ENCODE measurements at regions of chr10 and their contacts with region 1.

Region 1: DNA sequence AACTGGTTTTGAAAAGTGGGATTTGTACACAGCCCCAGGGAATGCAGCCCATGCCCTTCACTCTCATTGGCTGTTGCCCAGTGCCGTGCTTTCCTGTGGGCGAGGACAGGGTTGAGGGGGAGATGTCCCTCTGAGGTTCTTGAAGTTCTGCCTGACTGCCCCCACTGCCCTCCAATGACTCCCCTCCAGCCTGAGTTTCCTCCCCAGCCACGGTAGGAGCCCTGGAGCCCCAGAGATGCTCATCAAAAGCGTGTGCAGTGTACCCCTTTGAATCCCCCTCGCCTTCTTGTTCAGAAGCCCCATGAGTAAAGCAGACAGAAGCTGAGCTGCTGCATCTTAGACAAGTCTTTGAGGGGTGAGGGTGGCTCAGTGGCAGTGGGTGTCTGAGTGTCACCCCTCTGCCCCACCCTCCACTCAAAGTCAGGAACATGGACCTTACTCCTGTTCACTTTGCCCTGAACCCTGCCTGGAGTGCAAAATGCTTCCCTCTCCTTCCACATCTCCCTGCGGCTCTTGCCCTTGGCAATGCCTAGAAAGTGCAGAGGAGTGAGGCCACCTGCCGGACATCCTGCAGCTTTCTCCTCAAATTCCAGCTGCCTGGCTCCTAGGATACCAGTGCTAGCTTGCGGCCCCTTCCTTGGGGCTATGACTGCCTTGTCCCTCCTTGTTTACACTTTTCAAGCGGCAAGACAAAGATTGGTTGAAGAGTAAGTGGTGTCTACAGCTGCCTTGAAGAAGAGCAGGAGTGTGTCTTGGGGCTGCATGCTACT is 19.9 kb downstream of the FAM241B start:
- DNase-seq: no peak
- H3K4me3 ChIP-seq: no peak overlapping the region
- H3K27ac ChIP-seq: no peak overlapping the region
- H3K4me1 ChIP-seq: no peaks in the 10 kb centered on the region
- H3K27me3 ChIP-seq: peaks cover 4% of the 10 kb centered on the region
- CTCF ChIP-seq: no peak
- EP300 ChIP-seq: no peak
- POLR2A ChIP-seq: no peak

Region 2: GRCh38 chr10:69716711-69717560 is 67.0 kb after region 1 on chr10:
- in situ Hi-C with region 1: loop called in 1 of 4 experiments (anchors 10 kb)
- intact Hi-C with region 1: no loop called
- DNase-seq: peak; percentile 66
- H3K4me3 ChIP-seq: no peak overlapping the region
- H3K27ac ChIP-seq: no peak overlapping the region
- H3K4me1 ChIP-seq: no peaks in the 10 kb centered on the region
- H3K27me3 ChIP-seq: no peaks in the 10 kb centered on the region
- CTCF ChIP-seq: peak; percentile 54 to 82 (median 74)
- EP300 ChIP-seq: no peak
- POLR2A ChIP-seq: no peak

Region 3: DNA sequence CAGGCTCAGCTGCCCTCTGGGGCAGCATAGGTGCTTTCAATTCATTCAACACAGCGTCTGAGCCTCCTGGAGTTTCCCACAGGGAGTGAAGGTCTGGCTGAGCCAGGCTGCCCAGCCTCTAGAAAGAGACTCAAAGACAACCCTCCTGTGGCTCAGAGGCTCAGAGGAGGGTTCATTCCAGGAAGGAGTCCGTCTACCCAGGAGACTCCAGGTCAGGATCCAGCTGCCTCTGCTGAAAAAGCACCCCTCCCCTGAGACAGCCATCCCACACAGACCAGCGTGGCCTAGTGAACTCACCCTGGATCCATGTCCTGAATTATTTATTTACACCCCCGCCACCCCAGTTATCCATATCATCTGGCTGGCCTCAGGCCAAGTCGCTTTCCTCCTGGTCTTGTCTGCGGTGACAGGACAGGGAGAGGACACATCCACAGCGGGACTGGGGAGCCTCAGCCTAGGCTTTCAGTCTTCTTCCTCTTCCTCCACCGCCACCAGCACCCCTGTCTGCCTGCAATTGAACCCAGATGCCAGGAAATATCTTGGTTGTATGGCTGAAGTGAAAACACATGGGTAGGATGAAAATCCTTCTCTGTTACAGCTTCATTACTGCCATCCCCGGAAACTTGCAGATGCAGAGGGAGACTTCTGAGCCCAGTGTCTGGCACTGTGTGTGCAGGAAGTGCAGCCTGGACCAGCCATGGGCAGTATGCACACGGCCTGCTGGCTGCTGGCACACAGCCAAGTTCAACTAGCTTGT is 107.8 kb after region 1 on chr10:
- in situ Hi-C with region 1: no loop called
- intact Hi-C with region 1: no loop called
- DNase-seq: no peak
- H3K4me3 ChIP-seq: no peak overlapping the region
- H3K27ac ChIP-seq: no peak overlapping the region
- H3K4me1 ChIP-seq: peaks cover 0 to 4% (median 0%) of the 10 kb centered on the region in 4 donors
- H3K27me3 ChIP-seq: no peaks in the 10 kb centered on the region
- CTCF ChIP-seq: no peak
- EP300 ChIP-seq: no peak
- POLR2A ChIP-seq: no peak